Mammary epithelial cell (primary cell): ENCODE measurements at regions of chr1 and their contacts with region 1.

Region 1: DNA sequence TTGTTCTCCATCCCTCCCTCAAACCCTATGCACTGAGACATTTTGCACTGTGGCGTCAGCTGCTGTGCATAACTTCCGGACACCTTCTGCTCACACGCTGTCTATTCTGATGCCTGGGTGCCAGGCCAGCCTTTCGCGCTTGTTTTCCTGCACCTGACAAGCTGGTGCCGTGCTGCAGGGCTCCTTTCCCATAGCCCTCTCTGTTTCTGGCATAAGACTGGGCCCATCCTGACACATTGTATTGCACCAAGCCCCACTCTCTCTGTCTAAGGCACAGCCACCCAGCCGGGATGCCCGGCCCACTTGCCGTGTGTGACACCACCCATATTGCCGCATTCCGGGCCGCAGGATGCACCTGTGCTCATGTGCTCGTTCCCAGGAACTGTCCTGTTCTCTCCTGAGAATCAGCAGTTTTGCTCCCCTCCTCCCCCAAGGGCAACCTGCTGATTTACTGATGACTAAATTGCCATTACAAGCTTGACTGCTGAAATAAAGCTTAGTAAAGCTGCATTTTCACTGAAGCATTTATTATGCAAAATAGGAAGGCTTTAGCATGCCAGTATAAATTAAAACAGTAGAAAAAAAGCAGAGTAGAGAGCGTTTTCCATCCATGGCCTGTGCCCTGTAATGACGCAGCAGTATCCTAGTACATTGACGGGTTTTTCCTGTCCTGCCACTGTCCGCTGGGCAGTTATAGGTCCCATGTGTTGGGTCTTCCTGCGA is 88.0 kb downstream of the CD247 start:
- DNase-seq: no peak
- H3K4me3 ChIP-seq: no peak overlapping the region
- H3K27ac ChIP-seq: no peak overlapping the region
- H3K4me1 ChIP-seq: no peaks in the 10 kb centered on the region
- H3K27me3 ChIP-seq: no peaks in the 10 kb centered on the region
- CTCF ChIP-seq: no peak

Region 2: DNA sequence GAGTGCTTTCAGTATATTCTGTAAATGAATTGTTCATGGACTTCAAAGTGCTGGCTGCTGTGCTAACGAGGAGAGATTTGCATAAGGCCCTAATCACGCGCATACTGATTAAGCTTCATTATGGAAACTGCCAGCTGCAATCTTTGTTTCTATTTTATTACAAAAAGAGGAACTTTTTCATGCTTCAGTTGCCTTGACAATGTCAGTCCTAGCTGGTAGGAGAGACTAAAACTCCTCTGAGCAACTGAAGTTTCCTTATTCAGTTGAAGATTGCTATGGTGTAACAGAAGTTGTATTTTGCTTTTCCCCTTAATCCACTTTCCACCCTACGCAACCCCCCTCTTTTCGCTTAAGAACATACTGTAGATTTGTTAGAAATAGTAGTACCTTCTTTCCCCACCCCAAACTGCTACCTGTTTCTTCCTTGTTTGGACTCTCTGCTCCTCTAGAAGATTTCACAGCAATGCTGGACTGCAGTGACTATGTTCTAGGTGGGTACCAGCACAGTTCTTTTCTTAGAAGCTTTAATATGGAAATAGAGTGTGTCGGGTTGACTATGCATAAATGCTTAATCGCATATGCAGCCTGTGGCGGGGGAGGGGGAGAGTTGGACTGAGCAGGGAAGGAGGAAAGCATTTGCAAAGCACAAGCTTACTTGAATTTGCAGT is 101.3 kb before region 1 on chr1:
- CTCF ChIA-PET with region 1: no interaction called
- dilution Hi-C with region 1: no loop called
- in situ Hi-C with region 1: no loop called
- intact Hi-C with region 1: no loop called
- DNase-seq: no peak
- H3K4me3 ChIP-seq: no peak overlapping the region
- H3K27ac ChIP-seq: no peak overlapping the region
- H3K4me1 ChIP-seq: no peaks in the 10 kb centered on the region
- H3K27me3 ChIP-seq: no peaks in the 10 kb centered on the region
- CTCF ChIP-seq: no peak

Region 3: GRCh38 chr1:167373398-167373797 is 56.9 kb before region 1 on chr1:
- CTCF ChIA-PET with region 1: no interaction called
- dilution Hi-C with region 1: loop called (anchors 5 kb)
- in situ Hi-C with region 1: no loop called
- intact Hi-C with region 1: no loop called
- DNase-seq: no peak
- H3K4me3 ChIP-seq: no peak overlapping the region
- H3K27ac ChIP-seq: no peak overlapping the region
- H3K4me1 ChIP-seq: no peaks in the 10 kb centered on the region
- H3K27me3 ChIP-seq: no peaks in the 10 kb centered on the region
- CTCF ChIP-seq: no peak

Region 4: GRCh38 chr1:167491586-167492461 is 61.5 kb after region 1 on chr1:
- CTCF ChIA-PET with region 1: no interaction called
- dilution Hi-C with region 1: loop called (anchors 5 kb)
- in situ Hi-C with region 1: no loop called
- intact Hi-C with region 1: no loop called
- DNase-seq: no peak
- H3K4me3 ChIP-seq: no peak overlapping the region
- H3K27ac ChIP-seq: no peak overlapping the region
- H3K4me1 ChIP-seq: no peaks in the 10 kb centered on the region
- H3K27me3 ChIP-seq: no peaks in the 10 kb centered on the region
- CTCF ChIP-seq: no peak